ENCODE measurements at regions of chr6 and their contacts with region 1.

Region 1: GRCh38 chr6:108578595-108579327 is 18.0 kb downstream of the FOXO3 start:
- H3K4me3 Mint-ChIP-seq: no peak overlapping the region
- H3K27ac Mint-ChIP-seq: no peak overlapping the region
- H3K4me1 Mint-ChIP-seq: peaks cover 80% of the 10 kb centered on the region
- H3K27me3 Mint-ChIP-seq: no peaks in the 10 kb centered on the region

Region 2: DNA sequence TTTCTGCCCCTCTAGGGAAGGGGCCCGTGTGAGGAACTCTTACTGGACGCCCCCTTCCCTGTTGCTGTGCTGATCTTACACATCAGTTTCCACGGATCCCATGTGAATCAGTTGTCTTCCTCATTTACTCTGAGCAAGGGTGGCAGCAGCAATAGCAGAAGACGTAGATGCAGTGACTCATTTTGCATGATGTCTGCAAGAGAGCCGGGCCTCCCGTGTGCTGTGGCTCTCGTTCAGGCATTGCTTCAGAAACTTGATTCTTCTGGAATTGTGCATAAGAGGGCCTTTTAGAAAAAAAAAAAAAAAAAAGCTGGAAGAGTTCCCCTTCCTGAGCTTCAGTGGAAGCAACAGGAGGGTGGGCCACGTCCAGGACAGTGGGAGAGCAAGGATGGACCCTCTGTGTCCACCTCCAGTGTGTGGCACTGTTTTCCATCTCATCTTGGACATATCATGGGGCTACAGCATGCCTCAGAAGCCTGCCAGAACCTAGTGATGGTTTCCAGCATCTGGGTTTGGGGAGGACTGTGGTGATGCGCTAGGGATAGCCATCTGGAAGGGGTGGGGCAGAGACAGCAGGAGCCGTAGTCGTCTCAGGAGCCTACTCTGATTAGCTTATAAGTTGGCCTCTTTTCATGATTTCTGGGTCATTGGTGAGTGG is 44.0 kb after region 1 on chr6:
- intact Hi-C with region 1: loop called (anchors 5 kb)
- H3K4me3 Mint-ChIP-seq: peak overlapping the region; percentile 77
- H3K27ac Mint-ChIP-seq: peak overlapping the region; percentile 89
- H3K4me1 Mint-ChIP-seq: peaks cover 53% of the 10 kb centered on the region
- H3K27me3 Mint-ChIP-seq: no peaks in the 10 kb centered on the region